Activated CD4-positive, alpha-beta memory T cell treated with anti-CD3 and anti-CD28 coated beads for 36 hours (primary cell): ENCODE measurements at regions of chr15 and their contacts with region 1.

Region 1: DNA sequence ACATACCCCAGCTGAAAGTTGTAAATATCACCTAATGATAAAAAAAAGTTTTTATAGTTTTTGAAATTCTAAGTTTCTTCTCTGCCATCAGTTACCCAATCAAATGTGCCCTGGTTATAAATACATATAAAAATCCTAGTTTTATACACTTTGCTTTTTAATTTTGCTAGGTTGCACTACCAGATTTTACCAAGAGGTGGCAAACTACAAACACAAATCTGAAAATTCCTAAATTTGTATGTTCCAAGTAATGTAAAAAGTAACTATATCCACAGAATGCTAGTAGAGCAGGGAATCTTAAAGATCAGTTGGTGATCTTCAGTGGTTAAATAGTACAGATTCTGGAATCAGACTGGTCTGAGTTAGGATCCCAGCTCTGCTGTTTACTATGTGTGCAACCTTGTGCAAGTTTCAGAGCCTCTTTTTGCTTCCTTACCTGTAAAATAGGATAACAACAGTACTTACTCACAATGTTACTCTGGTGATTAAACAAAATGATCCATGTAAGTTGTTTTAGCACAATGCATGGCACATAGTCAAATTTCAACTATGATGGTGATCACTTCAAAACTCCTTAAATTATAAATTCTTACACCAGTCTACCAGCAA is 11.0 kb downstream of the TRPM7 start:
- DNase-seq: no peak
- H3K4me3 Mint-ChIP-seq: no peak overlapping the region
- H3K27ac Mint-ChIP-seq: peak overlapping the region; percentile 33
- H3K4me1 Mint-ChIP-seq: peaks cover 40% of the 10 kb centered on the region
- H3K27me3 Mint-ChIP-seq: no peaks in the 10 kb centered on the region

Region 2: GRCh38 chr15:50883903-50884302 is 208.3 kb after region 1 on chr15:
- CTCF ChIA-PET with region 1: interaction called, 13 read pairs
- POLR2A ChIA-PET with region 1: no interaction called
- intact Hi-C with region 1: no loop called
- DNase-seq: peak; percentile 34
- H3K4me3 Mint-ChIP-seq: no peak overlapping the region
- H3K27ac Mint-ChIP-seq: peak overlapping the region; percentile 56
- H3K4me1 Mint-ChIP-seq: peaks cover 65% of the 10 kb centered on the region
- H3K27me3 Mint-ChIP-seq: no peaks in the 10 kb centered on the region